ENCODE measurements at regions of chr5 and their contacts with region 1.

Region 1: GRCh38 chr5:149799119-149799623 is 69.1 kb downstream of the PPARGC1B start:
- DNase-seq: peak in 1 of 10 donors; percentile 75
- H3K4me3 ChIP-seq: no peak overlapping the region
- H3K27ac ChIP-seq: peak overlapping the region in 26 of 59 donors; percentile 10 to 66 (median 38)
- H3K27me3 ChIP-seq: no peaks in the 10 kb centered on the region
- CTCF ChIP-seq: no peak

Region 2: DNA sequence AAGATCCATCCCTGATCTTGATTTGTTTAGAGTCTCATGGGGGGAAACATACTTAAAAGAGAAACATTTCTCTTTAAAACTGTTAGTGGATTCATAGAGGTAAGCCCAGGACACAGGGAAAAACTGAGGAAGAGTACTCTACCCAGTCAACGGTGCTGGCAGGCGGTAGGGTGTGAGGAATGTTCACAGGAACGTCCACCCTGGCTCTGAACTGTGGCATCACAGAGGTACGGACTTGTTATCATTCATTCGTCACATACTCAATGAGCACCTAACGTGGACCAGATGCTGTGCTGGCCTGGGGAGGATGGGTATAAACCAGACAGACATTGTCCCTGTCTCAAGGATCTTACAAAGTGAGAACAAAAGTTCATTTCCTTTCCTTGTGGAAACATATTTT is 87.8 kb before region 1 on chr5:
- intact Hi-C with region 1: no loop called
- DNase-seq: no peak
- H3K4me3 ChIP-seq: no peak overlapping the region
- H3K27ac ChIP-seq: no peak overlapping the region
- H3K27me3 ChIP-seq: peaks cover 0 to 3% (median 0%) of the 10 kb centered on the region in 45 donors
- CTCF ChIP-seq: no peak

Region 3: GRCh38 chr5:149731639-149732323 is 67.4 kb before region 1 on chr5:
- intact Hi-C with region 1: loop called in 1 of 2 experiments (anchors 5 kb)
- DNase-seq: peak; percentile 42 to 84 (median 76)
- H3K4me3 ChIP-seq: peak overlapping the region; percentile 56 to 96 (median 82)
- H3K27ac ChIP-seq: peak overlapping the region in 53 of 59 donors; percentile 13 to 94 (median 81)
- H3K27me3 ChIP-seq: no peaks in the 10 kb centered on the region
- CTCF ChIP-seq: peak in 1 of 56 donors; percentile 15

Region 4: DNA sequence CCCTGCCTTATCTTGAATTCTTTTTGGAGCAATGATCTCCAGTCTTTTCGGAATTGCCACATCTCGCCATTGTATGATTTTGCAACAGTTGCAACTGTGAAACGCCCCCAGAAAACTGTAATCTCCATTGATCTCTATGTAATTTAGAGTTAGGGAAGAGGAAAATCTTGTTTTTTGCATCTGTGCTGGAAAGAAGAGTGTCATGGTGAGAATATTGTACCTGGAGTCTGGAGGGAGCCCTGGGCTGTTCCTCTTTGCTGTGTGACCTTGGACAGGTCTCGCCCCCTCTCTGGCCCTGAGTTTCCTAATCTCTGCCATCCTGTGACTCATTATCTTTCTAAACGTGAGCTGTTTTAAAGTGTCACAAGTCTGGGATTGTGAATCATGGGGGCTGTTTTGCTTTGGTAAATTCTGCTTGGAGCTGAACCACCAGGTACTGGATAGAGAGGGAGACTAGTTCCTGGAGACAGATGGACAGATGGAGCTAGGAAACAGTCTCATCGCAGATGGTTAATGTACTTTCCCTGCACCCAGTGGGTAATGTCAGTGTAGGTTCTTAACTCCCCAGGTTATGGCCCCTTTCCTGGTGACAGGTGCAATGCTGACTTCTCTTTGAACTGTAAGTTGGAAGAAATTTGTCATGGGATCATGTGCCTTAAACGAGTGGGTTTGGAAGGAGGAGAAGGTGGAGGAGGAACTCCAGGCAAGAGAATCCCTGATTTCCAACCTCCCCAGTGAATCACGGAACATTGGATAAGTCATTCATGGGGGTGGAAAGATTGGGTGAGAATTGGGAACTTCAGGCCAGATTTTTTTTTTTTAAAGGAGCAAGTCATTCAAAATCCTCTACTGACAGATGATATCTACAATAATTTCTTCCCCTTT is 49.4 kb before region 1 on chr5:
- intact Hi-C with region 1: loop called in 1 of 2 experiments (anchors 5 kb)
- DNase-seq: no peak
- H3K4me3 ChIP-seq: no peak overlapping the region
- H3K27ac ChIP-seq: peak overlapping the region in 15 of 59 donors; percentile 12 to 59 (median 32)
- H3K27me3 ChIP-seq: no peaks in the 10 kb centered on the region
- CTCF ChIP-seq: no peak